H1 (cell line): ENCODE measurements at regions of chr15 and their contacts with region 1.

Region 1: GRCh38 chr15:66046751-66047150 is 177.5 kb downstream of the RAB11A start:
- DNase-seq: no peak
- H3K4me3 ChIP-seq: no peak overlapping the region
- H3K27ac ChIP-seq: no peak overlapping the region
- H3K4me1 ChIP-seq: peaks cover 7 to 15% (median 8%) of the 10 kb centered on the region in 4 experiments
- H3K27me3 ChIP-seq: no peaks in the 10 kb centered on the region
- CTCF ChIP-seq: peak in 1 of 3 experiments; percentile 23; a peak in 1 of 4 replicates
- EP300 ChIP-seq: no peak
- POLR2A ChIP-seq: no peak
- RAD21 ChIP-seq: peak; percentile 28 to 46; a peak in 3 of 4 replicates

Region 2: GRCh38 chr15:66057089-66057488 is 10.3 kb after region 1 on chr15:
- CTCF ChIA-PET with region 1: interaction called, 10 read pairs
- POLR2A ChIA-PET with region 1: interaction called, 5 read pairs
- DNase-seq: no peak
- H3K4me3 ChIP-seq: no peak overlapping the region
- H3K27ac ChIP-seq: no peak overlapping the region
- H3K4me1 ChIP-seq: peaks cover 0 to 7% (median 2%) of the 10 kb centered on the region in 4 experiments; a peak in 4 of 7 replicates
- H3K27me3 ChIP-seq: no peaks in the 10 kb centered on the region
- CTCF ChIP-seq: no peak
- EP300 ChIP-seq: no peak
- POLR2A ChIP-seq: no peak
- RAD21 ChIP-seq: no peak

Region 3: DNA sequence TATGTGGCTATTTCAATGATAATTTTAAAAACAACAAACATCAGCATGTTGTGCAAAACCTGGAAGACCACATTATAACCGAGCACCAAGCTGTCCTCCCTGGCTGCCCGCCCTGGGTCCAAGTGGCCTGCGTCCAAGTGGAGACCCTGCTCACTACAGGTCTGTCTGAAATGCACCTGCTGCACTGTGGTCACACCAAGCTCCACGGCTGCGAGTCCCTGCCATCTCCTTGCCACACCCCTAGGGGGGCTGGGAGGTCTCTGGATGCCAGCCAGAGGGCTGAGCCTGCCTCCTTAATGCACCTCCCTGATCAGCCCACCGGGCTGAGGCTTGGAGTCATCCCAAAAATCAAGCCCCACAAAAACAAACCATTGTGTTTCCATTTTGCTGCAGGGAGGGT is 19.7 kb after region 1 on chr15:
- CTCF ChIA-PET with region 1: interaction called, 10 read pairs
- POLR2A ChIA-PET with region 1: interaction called, 5 read pairs
- DNase-seq: no peak
- H3K4me3 ChIP-seq: no peak overlapping the region
- H3K27ac ChIP-seq: no peak overlapping the region
- H3K4me1 ChIP-seq: peaks cover 15 to 38% (median 28%) of the 10 kb centered on the region in 4 experiments
- H3K27me3 ChIP-seq: no peaks in the 10 kb centered on the region
- CTCF ChIP-seq: peak in 1 of 3 experiments; percentile 9; a peak in 2 of 4 replicates
- EP300 ChIP-seq: no peak
- POLR2A ChIP-seq: no peak
- RAD21 ChIP-seq: peak in 1 of 2 experiments; percentile 15; a peak in 1 of 4 replicates

Region 4: GRCh38 chr15:66231394-66232266 is 184.9 kb after region 1 on chr15:
- CTCF ChIA-PET with region 1: no interaction called
- POLR2A ChIA-PET with region 1: no interaction called
- DNase-seq: no peak
- H3K4me3 ChIP-seq: no peak overlapping the region
- H3K27ac ChIP-seq: no peak overlapping the region
- H3K4me1 ChIP-seq: no peaks in the 10 kb centered on the region; a peak in 1 of 7 replicates
- H3K27me3 ChIP-seq: no peaks in the 10 kb centered on the region; a peak in 1 of 7 replicates
- CTCF ChIP-seq: no peak
- EP300 ChIP-seq: no peak
- POLR2A ChIP-seq: no peak
- RAD21 ChIP-seq: no peak